ENCODE measurements at regions of chr17 and their contacts with region 1.

Region 1: GRCh38 chr17:75456417-75457046 is at the start of gene TMEM94:
- DNase-seq: peak; percentile 82
- ATAC-seq: peak; percentile 98
- H3K4me3 Mint-ChIP-seq: peak within 1 kb of the TSS; percentile 92
- H3K27ac Mint-ChIP-seq: peak within 1 kb of the TSS; percentile 85
- H3K4me1 Mint-ChIP-seq: peaks cover 28% of the 10 kb centered on the region
- H3K27me3 Mint-ChIP-seq: no peaks in the 10 kb centered on the region
- total RNA-seq, gene TMEM94: 112 to 115 TPM

Region 2: GRCh38 chr17:75124041-75124818 is 332.3 kb before region 1 on chr17:
- POLR2A ChIA-PET with region 1: no interaction called
- DNase-seq: no peak
- ATAC-seq: peak; percentile 10
- H3K4me3 Mint-ChIP-seq: no peak overlapping the region
- H3K27ac Mint-ChIP-seq: peak overlapping the region; percentile 95
- H3K4me1 Mint-ChIP-seq: peaks cover 30% of the 10 kb centered on the region
- H3K27me3 Mint-ChIP-seq: no peaks in the 10 kb centered on the region

Region 3: DNA sequence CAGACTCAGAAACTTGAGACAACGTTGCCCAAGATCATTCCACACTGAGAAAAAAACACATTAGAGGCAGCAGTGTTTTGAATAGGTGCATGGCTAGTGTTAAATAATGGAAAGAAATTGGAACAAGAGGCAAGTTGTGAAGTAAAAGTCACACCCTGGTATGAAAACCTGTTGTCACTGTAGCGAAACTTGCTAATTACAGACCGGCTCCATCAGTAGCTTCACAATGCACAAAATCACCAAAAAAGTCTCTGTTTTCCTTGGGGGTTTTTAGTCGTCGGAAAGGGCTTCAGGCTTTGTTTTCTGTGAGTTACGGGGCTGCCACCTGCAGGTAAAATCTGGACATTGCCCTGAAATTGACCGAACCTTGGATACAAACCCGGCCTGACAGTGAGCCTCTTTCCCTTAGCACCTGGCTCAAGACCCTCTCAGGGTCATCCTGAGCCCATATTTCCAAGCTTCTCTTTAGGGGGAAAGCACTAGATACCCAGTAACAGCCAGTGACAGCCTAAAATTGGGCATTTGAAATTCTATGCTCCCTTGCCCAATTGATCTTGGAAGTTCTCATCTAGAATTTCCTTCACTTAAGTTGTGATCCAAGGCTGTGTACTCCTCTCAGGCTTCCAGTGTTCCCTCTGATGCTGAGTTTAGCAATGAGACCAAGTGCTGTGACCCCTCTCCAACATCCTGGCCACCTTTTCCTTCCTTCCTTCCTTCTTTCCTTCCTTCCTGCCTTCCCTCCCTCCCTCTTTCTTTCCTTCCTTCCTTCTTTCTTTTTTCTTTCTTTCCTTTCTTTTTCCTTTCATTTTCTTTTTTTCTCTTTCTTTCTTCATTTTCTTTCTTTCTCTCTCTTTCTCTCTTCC is 43.8 kb before region 1 on chr17:
- POLR2A ChIA-PET with region 1: no interaction called
- DNase-seq: peak; percentile 78
- ATAC-seq: peak; percentile 70
- H3K4me3 Mint-ChIP-seq: peak overlapping the region; percentile 73
- H3K27ac Mint-ChIP-seq: peak overlapping the region; percentile 81
- H3K4me1 Mint-ChIP-seq: peaks cover 28% of the 10 kb centered on the region
- H3K27me3 Mint-ChIP-seq: peaks cover 19% of the 10 kb centered on the region

Region 4: DNA sequence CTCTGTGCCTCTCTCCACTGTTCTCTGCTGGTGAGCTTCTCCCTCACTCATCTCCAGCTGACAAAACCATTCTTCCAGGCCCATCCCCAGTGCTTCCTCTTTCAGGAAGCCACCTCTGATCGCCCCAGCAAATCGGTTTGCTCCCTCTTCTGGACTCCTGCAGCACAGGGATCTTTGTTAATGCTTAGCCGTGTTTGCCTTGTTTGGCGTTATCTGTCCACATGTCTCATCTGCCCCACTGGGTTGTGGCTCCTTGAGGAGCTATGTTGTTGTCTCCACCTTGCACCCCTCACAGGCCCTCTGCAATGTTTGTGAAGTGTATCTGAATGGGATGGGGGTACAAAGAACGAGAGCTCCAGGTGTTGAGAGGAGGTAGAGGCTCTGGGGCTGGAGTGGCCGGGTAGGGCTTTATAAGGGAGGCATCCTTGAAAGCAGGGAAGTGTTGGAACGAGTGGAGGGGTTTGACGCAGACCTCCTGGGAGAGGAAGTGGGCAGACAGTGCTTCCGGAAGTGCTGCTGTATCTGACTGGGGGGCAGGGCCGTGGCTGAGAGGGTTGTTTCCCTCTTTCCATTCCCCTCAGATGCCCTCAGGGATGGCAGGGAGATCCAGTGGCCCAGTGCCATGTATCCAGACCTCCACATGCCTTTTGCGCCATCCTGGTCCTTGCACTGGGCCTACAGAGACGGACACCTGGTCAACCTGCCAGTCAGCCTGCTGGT is 31.0 kb after region 1 on chr17:
- POLR2A ChIA-PET with region 1: interaction called, 27 read pairs
- DNase-seq: peak; percentile 72
- ATAC-seq: peak; percentile 95
- H3K4me3 Mint-ChIP-seq: peak overlapping the region; percentile 77
- H3K27ac Mint-ChIP-seq: peak overlapping the region; percentile 98
- H3K4me1 Mint-ChIP-seq: peaks cover 23% of the 10 kb centered on the region
- H3K27me3 Mint-ChIP-seq: no peaks in the 10 kb centered on the region

Region 5: GRCh38 chr17:75535119-75535537 is 78.6 kb after region 1 on chr17:
- POLR2A ChIA-PET with region 1: no interaction called
- DNase-seq: peak; percentile 70
- ATAC-seq: peak; percentile 99
- H3K4me3 Mint-ChIP-seq: peak overlapping the region; percentile 64
- H3K27ac Mint-ChIP-seq: peak overlapping the region; percentile 89
- H3K4me1 Mint-ChIP-seq: peaks cover 17% of the 10 kb centered on the region
- H3K27me3 Mint-ChIP-seq: peaks cover 1% of the 10 kb centered on the region

Region 6: GRCh38 chr17:75645889-75646637 is 189.5 kb after region 1 on chr17:
- POLR2A ChIA-PET with region 1: no interaction called
- DNase-seq: no peak
- ATAC-seq: peak; percentile 95
- H3K4me3 Mint-ChIP-seq: peak overlapping the region; percentile 43
- H3K27ac Mint-ChIP-seq: peak overlapping the region; percentile 92
- H3K4me1 Mint-ChIP-seq: peaks cover 6% of the 10 kb centered on the region
- H3K27me3 Mint-ChIP-seq: no peaks in the 10 kb centered on the region